ENCODE measurements at regions of chr18 and their contacts with region 1.

Region 1: DNA sequence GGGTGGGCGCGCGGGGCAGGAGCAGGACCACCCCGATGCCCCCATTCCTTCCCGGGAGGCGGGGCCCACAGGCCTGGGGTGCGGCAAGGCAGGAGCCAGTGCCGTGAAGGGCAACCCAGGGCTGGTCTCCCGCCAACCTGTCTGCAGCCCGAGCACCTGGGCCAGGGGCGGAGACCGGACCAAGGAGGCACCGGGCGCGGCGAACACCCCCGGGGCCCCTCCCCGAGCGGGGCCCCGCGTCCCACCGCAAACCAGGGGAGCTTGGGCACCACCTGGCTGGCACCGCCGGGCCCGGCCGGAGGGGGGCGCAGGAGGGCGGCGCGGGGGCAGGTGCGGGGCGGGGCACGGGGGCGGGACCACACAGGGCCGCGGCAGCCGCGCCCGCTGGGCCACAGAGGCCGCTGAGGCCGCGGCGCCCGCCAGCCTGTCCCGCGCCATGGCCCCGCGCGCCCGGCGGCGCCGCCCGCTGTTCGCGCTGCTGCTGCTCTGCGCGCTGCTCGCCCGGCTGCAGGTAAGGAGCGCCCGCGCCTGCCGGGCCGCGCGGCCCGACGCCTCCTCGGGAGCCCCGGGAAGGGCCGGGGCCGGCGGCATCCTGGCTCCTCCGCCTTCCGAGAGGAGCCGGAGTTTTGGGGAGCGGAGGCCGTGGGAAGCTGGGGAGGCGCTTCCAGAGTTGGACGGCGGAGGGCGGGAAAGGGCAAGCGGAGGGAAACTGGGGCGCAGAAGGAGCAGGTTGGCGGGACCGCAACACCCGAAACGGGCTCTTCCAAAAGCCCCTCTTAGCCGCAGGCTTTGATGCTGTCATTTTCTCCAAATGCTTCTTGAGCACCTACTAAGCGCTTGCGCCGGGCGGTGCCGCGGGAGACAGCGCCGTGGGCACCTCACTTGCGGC is at the start of gene TNFRSF11A:
- DNase-seq: peak; percentile 30
- H3K4me3 ChIP-seq: peak within 1 kb of the TSS; percentile 55 to 84 (median 83)
- H3K27ac ChIP-seq: no peak within 1 kb of the TSS
- H3K4me1 ChIP-seq: peaks cover 55% of the 10 kb centered on the region
- H3K27me3 ChIP-seq: no peaks in the 10 kb centered on the region
- CTCF ChIP-seq: peak; percentile 12 to 42
- POLR2A ChIP-seq: no peak
- total RNA-seq, gene TNFRSF11A: 11.1 and 11.9 TPM in 2 replicates

Region 2: GRCh38 chr18:62281684-62282083 is 43.5 kb before region 1 on chr18:
- CTCF ChIA-PET with region 1: interaction called, 5 read pairs
- POLR2A ChIA-PET with region 1: no interaction called
- dilution Hi-C with region 1: no loop called
- intact Hi-C with region 1: loop called (anchors 5 kb)
- DNase-seq: peak; percentile 83
- H3K4me3 ChIP-seq: no peak overlapping the region
- H3K27ac ChIP-seq: peak overlapping the region; percentile 80
- H3K4me1 ChIP-seq: peaks cover 28% of the 10 kb centered on the region
- H3K27me3 ChIP-seq: no peaks in the 10 kb centered on the region
- CTCF ChIP-seq: no peak
- POLR2A ChIP-seq: no peak

Region 3: GRCh38 chr18:62312851-62313250 is 12.3 kb before region 1 on chr18:
- CTCF ChIA-PET with region 1: interaction called, 12 read pairs
- POLR2A ChIA-PET with region 1: no interaction called
- dilution Hi-C with region 1: no loop called
- intact Hi-C with region 1: no loop called
- DNase-seq: no peak
- H3K4me3 ChIP-seq: no peak overlapping the region
- H3K27ac ChIP-seq: no peak overlapping the region
- H3K4me1 ChIP-seq: no peaks in the 10 kb centered on the region
- H3K27me3 ChIP-seq: no peaks in the 10 kb centered on the region
- CTCF ChIP-seq: no peak
- POLR2A ChIP-seq: no peak

Region 4: DNA sequence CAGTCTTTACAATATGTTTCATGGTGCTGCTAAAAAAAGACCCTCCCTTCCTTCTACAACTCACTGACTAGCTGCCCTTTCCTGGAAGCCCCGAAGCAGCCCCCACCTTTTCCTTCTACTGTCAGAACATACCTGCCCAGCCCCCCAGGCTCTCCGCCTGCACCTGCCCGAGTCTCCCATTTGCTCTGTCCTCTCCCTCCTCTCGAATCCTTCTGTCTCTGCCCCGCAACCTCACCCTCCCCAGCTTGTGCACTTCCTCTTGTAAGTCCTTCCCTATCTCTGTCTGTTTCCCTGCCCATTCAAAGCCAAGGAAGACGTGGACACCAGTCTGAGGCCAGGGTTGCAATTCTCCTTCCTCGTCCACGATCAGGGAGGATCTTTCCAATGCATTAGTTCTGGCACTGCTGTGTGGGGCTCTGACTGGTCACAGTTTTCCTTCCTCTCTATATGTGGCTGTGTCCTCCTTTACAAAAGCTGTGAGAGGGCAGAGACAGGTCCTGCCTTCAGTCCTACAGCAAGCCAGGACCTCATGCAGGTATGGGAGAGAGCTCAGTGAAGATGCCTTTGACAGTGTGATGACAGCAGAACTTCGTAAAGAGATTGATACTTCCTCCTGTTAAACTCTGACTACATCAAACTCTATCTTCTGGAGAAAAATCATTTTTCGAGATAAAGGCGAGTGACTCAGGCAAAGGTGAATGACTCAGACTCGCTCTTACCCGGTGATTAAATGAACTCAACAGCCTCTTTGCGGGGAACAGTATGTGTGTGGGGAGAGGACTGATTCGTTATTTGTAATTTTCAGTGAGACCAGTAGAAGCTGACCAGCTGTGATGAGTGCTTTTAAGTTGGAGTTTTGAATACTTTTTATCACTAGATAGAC is 14.2 kb after region 1 on chr18:
- CTCF ChIA-PET with region 1: interaction called, 6 read pairs
- POLR2A ChIA-PET with region 1: no interaction called
- dilution Hi-C with region 1: no loop called
- intact Hi-C with region 1: loop called (anchors 1 kb)
- DNase-seq: peak; percentile 79
- H3K4me3 ChIP-seq: no peak overlapping the region
- H3K27ac ChIP-seq: peak overlapping the region; percentile 32
- H3K4me1 ChIP-seq: peaks cover 35% of the 10 kb centered on the region
- H3K27me3 ChIP-seq: no peaks in the 10 kb centered on the region
- CTCF ChIP-seq: no peak
- POLR2A ChIP-seq: no peak

Region 5: GRCh38 chr18:62399781-62400308 is 74.7 kb after region 1 on chr18:
- CTCF ChIA-PET with region 1: interaction called, 8 read pairs
- POLR2A ChIA-PET with region 1: no interaction called
- dilution Hi-C with region 1: no loop called
- intact Hi-C with region 1: loop called (anchors 5 kb)
- DNase-seq: peak; percentile 46
- H3K4me3 ChIP-seq: no peak overlapping the region
- H3K27ac ChIP-seq: no peak overlapping the region
- H3K4me1 ChIP-seq: peaks cover 4% of the 10 kb centered on the region
- H3K27me3 ChIP-seq: no peaks in the 10 kb centered on the region
- CTCF ChIP-seq: peak; percentile 46 to 52
- POLR2A ChIP-seq: no peak

Measured in endothelial cell of umbilical vein (primary cell).